ENCODE measurements at regions of chr14 and their contacts with region 1.

Region 1: GRCh38 chr14:24721775-24722174 is 87.8 kb upstream of the GZMB start:
- DNase-seq: no peak
- H3K4me3 ChIP-seq: no peak overlapping the region
- H3K27ac ChIP-seq: no peak overlapping the region
- H3K4me1 ChIP-seq: no peaks in the 10 kb centered on the region
- H3K27me3 ChIP-seq: no peaks in the 10 kb centered on the region
- CTCF ChIP-seq: no peak

Region 2: GRCh38 chr14:24971255-24971654 is 249.5 kb after region 1 on chr14:
- intact Hi-C with region 1: no loop called
- DNase-seq: no peak
- H3K4me3 ChIP-seq: no peak overlapping the region
- H3K27ac ChIP-seq: no peak overlapping the region
- H3K4me1 ChIP-seq: no peaks in the 10 kb centered on the region
- H3K27me3 ChIP-seq: no peaks in the 10 kb centered on the region
- CTCF ChIP-seq: no peak

Region 3: GRCh38 chr14:25150934-25151790 is 429.4 kb after region 1 on chr14:
- intact Hi-C with region 1: loop called (anchors 10 kb)
- DNase-seq: peak in 2 of 5 donors; percentile 45 to 62
- H3K4me3 ChIP-seq: no peak overlapping the region
- H3K27ac ChIP-seq: no peak overlapping the region
- H3K4me1 ChIP-seq: no peaks in the 10 kb centered on the region
- H3K27me3 ChIP-seq: no peaks in the 10 kb centered on the region
- CTCF ChIP-seq: peak; percentile 72

Measured in kidney (tissue), 22 donors.